ENCODE measurements at regions of chr17 and their contacts with region 1.

Region 1: GRCh38 chr17:21511363-21512198 is 135.4 kb downstream of the KCNJ12 start:
- DNase-seq: peak; percentile 82 to 86
- H3K4me3 ChIP-seq: peak overlapping the region in 1 of 3 donors; percentile 35
- H3K27ac ChIP-seq: peak overlapping the region in 1 of 3 donors; percentile 35
- H3K4me1 ChIP-seq: peaks cover 4% of the 10 kb centered on the region in 2 donors
- H3K27me3 ChIP-seq: no peaks in the 10 kb centered on the region
- CTCF ChIP-seq: peak; percentile 54 to 85 (median 58)
- POLR2A ChIP-seq: no peak

Region 2: DNA sequence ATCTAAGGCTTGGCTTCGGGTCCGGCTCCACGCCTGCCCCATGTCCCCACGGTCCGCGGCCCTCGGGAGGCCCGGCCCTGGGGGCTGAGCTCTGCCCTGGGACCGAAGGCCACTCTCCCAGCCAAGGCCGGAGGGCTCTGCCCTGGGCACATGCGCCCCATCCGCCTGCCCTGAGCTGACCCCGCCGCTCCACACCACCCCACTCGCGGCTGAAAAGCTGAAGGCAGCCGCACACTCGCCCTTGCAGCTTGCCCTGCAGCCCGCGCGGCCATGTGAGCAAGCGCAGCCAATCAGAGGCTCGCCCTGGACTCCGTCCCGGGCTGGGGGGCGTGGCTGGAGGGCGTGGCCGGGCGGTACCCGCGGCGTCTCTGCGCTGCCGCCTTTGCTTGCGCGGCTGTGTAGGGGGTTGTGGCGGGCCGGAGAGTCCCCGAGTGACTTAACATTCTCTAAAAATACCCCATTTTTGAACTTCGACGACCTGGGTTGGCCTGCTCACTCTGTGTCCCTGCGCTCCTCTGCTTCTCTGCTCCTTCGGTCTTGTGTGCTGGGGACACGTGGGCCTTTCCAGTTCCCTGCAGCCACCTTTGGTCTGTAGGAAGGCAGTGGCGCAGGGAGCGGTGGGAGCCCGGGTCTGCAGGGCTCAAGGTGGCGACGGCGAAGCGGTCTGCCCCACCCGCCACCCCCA is 235.9 kb before region 1 on chr17:
- intact Hi-C with region 1: loop called (anchors 5 kb)
- DNase-seq: peak; percentile 94
- H3K4me3 ChIP-seq: peak overlapping the region; percentile 7 to 54 (median 12)
- H3K27ac ChIP-seq: peak overlapping the region; percentile 35 to 83 (median 77)
- H3K4me1 ChIP-seq: peaks cover 25 to 40% of the 10 kb centered on the region in 2 donors
- H3K27me3 ChIP-seq: no peaks in the 10 kb centered on the region
- CTCF ChIP-seq: peak in 1 of 6 experiments; percentile 5
- POLR2A ChIP-seq: peak in 1 of 2 donors; percentile 88

Region 3: DNA sequence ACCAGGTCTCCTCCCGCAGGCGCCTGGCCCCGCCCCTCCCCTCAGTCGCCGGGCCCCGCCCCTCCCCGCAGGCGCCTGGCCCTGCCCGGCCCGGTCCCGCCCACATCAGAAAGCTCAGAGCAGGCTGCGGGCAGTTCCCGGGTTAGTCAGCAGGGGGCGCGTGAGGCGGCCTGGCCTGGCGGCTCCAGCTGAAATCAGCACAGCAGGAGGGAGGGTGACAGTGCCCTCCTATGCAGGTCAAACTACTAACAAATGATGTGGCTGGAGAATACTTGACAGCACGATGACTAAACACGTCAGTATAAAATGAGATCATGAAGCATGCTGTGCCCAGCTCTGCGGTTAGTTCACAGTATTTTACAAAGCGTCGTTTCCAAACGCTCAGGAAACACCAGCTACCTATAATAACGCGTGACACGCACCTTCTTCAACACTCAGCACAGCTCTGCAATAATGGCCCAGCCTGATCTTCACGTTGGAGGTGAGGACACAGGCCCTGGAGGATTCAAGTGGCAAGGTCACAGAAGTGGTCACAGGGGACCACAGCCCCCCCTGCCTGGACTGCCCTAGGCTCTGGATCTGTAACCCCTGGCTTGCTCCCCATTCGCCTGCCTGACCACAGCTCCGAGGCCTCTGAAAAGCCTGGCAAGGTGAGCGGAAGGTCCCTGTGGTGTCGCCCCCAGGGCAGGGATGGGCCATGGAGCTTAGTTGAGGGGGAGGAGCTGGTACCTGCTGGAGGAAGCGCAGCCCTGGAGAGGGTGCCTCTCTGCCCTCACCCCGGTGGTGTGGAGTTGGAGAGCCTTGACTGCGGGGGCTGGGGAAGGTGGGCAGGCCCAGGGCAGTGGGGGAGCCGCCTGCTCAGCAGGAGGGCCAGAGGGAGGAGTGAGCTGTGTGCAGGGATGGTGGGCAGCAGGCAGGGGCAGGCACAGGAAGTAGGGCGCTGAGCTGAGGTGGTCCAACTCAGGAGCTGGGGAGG is 54.2 kb before region 1 on chr17:
- intact Hi-C with region 1: loop called (anchors 2 kb)
- DNase-seq: peak; percentile 90 to 93
- H3K4me3 ChIP-seq: no peak overlapping the region
- H3K27ac ChIP-seq: no peak overlapping the region
- H3K4me1 ChIP-seq: peaks cover 6% of the 10 kb centered on the region in 2 donors
- H3K27me3 ChIP-seq: no peaks in the 10 kb centered on the region
- CTCF ChIP-seq: peak; percentile 75 to 99 (median 86)
- POLR2A ChIP-seq: no peak